Activated CD4-positive, alpha-beta T cell treated with anti-CD3 and anti-CD28 coated beads for 36 hours (primary cell): ENCODE measurements at regions of chr7 and their contacts with region 1.

Region 1: GRCh38 chr7:129401967-129402860 is 32.0 kb upstream of the STRIP2 start:
- DNase-seq: peak; percentile 61
- ATAC-seq: peak; percentile 86
- H3K4me3 Mint-ChIP-seq: no peak overlapping the region
- H3K27ac Mint-ChIP-seq: peak overlapping the region; percentile 9
- H3K4me1 Mint-ChIP-seq: peaks cover 33% of the 10 kb centered on the region
- H3K27me3 Mint-ChIP-seq: no peaks in the 10 kb centered on the region

Region 2: DNA sequence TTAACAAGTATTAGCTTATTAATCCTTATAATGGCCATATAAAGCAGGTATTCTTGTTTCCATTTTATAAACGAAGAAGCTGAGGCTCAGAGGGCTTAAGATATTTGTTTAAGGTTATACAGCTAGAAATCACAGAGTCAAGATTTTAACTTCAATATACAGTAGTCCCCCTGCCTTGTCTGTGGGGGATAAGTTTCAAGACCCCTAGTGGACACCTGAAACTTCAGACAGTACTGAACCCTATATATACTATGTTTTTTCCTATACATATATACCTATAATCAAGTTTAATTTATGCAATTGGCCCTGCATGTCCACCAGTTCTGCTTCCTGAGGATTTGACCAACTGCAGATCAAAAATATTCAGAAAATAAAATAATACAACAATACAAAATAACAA is 12.4 kb before region 1 on chr7:
- CTCF ChIA-PET with region 1: interaction called, 12 read pairs
- POLR2A ChIA-PET with region 1: no interaction called
- intact Hi-C with region 1: no loop called
- DNase-seq: no peak
- ATAC-seq: no peak
- H3K4me3 Mint-ChIP-seq: no peak overlapping the region
- H3K27ac Mint-ChIP-seq: no peak overlapping the region
- H3K4me1 Mint-ChIP-seq: peaks cover 9% of the 10 kb centered on the region
- H3K27me3 Mint-ChIP-seq: no peaks in the 10 kb centered on the region

Region 3: DNA sequence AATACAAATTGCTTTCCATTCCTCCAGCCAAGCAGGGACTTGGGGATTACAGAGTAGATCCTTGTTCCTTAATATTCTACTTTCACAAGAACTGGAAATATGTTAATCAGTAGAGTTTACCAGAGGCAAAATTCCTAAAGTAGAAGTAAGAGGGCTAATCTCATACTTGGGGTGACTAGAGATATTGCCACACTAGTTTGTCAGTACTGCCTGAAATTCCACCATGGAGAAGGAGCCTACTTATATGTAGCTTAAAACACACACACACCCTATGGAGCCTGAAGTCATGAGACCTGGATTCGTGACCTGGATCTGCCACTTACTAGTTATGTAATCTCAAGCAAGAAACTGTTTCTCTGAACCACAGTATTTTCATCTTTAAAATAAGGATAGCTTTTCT is 65.9 kb after region 1 on chr7:
- CTCF ChIA-PET with region 1: interaction called, 34 read pairs
- POLR2A ChIA-PET with region 1: no interaction called
- intact Hi-C with region 1: loop called (anchors 1 kb)
- DNase-seq: no peak
- ATAC-seq: no peak
- H3K4me3 Mint-ChIP-seq: no peak overlapping the region
- H3K27ac Mint-ChIP-seq: no peak overlapping the region
- H3K4me1 Mint-ChIP-seq: peaks cover 16% of the 10 kb centered on the region
- H3K27me3 Mint-ChIP-seq: no peaks in the 10 kb centered on the region

Region 4: GRCh38 chr7:129635300-129636029 is 233.3 kb after region 1 on chr7:
- CTCF ChIA-PET with region 1: no interaction called
- POLR2A ChIA-PET with region 1: no interaction called
- intact Hi-C with region 1: loop called in 1 of 2 experiments (anchors 2 kb)
- DNase-seq: peak; percentile 84
- ATAC-seq: peak; percentile 97
- H3K4me3 Mint-ChIP-seq: no peak overlapping the region
- H3K27ac Mint-ChIP-seq: peak overlapping the region; percentile 65
- H3K4me1 Mint-ChIP-seq: peaks cover 37% of the 10 kb centered on the region
- H3K27me3 Mint-ChIP-seq: no peaks in the 10 kb centered on the region